ENCODE measurements at regions of chr19 and their contacts with region 1.

Region 1: GRCh38 chr19:6424939-6425731 is 524 bp upstream of the KHSRP start:
- DNase-seq: peak; percentile 98 to 100 (median 100)
- H3K4me3 ChIP-seq: peak overlapping the region in 1 of 2 donors; percentile 33
- H3K4me3 Mint-ChIP-seq: peak overlapping the region; percentile 70 to 88 (median 86)
- H3K27ac ChIP-seq: peak overlapping the region; percentile 62
- H3K27ac Mint-ChIP-seq: peak overlapping the region; percentile 81 to 99 (median 94)
- H3K4me1 ChIP-seq: peaks cover 42% of the 10 kb centered on the region
- H3K4me1 Mint-ChIP-seq: peaks cover 16 to 37% (median 29%) of the 10 kb centered on the region in 4 donors
- H3K27me3 ChIP-seq: no peaks in the 10 kb centered on the region
- H3K27me3 Mint-ChIP-seq: no peaks in the 10 kb centered on the region

Region 2: GRCh38 chr19:6318772-6319171 is 106.4 kb before region 1 on chr19:
- CTCF ChIA-PET with region 1: no interaction called
- POLR2A ChIA-PET with region 1: no interaction called
- intact Hi-C with region 1: no loop called
- DNase-seq: no peak
- H3K4me3 ChIP-seq: no peak overlapping the region
- H3K4me3 Mint-ChIP-seq: no peak overlapping the region
- H3K27ac ChIP-seq: no peak overlapping the region
- H3K27ac Mint-ChIP-seq: no peak overlapping the region
- H3K4me1 ChIP-seq: no peaks in the 10 kb centered on the region
- H3K4me1 Mint-ChIP-seq: no peaks in the 10 kb centered on the region
- H3K27me3 ChIP-seq: no peaks in the 10 kb centered on the region
- H3K27me3 Mint-ChIP-seq: no peaks in the 10 kb centered on the region

Region 3: GRCh38 chr19:6354098-6354674 is 70.9 kb before region 1 on chr19:
- CTCF ChIA-PET with region 1: no interaction called
- POLR2A ChIA-PET with region 1: no interaction called
- intact Hi-C with region 1: no loop called
- DNase-seq: no peak
- H3K4me3 ChIP-seq: no peak overlapping the region
- H3K4me3 Mint-ChIP-seq: no peak overlapping the region
- H3K27ac ChIP-seq: no peak overlapping the region
- H3K27ac Mint-ChIP-seq: peak overlapping the region in 1 of 7 donors; percentile 57
- H3K4me1 ChIP-seq: no peaks in the 10 kb centered on the region
- H3K4me1 Mint-ChIP-seq: peaks cover 0 to 2% (median 0%) of the 10 kb centered on the region in 4 donors
- H3K27me3 ChIP-seq: no peaks in the 10 kb centered on the region
- H3K27me3 Mint-ChIP-seq: no peaks in the 10 kb centered on the region

Region 4: DNA sequence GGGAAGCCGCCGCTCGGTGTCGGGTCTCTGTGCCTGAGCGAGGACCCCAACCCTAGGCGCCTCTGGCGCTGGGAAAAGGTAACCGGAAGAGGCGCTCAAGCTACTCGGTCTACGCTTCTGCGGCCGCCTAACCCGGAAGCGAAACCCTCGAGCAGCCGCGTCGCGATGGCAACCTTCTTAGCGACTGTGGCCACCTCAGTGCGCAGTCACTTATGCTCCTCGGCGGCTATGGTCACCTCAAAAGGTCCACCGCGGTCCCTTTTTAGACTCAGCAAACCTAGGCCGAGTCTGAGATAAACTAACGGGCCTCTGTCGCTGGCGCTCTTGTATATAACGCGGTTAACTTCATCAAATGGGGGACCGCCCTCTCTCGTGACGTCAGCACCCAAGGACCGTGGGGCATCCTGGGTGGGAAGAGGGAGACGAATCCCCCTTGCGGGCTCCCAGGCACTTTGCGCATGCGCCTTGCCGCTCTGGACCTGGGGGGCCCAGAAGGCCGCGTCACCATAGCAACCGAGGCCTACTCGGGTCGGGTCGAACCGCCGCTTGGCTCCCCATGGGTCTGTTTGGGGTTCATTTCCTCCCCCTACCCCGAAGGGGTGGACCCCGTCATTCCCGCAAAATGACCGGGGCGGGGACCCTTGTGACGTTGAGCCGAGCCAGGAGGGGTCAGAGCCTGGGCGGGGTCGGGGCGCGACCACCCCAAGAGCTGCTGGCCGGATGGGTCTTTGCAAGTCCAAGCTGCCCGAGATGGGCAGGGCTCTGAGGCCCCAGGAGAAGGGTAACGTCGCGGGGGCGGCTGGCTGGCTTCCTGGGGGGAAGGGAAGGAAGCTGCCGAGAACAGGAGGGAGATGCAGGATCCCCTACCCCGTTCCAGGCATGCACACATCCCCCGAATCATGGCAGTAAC is 31.8 kb before region 1 on chr19 and contains the start of gene GTF2F1:
- CTCF ChIA-PET with region 1: no interaction called
- POLR2A ChIA-PET with region 1: interaction called, 30 read pairs
- intact Hi-C with region 1: loop called (anchors 1 kb)
- DNase-seq: peak; percentile 93 to 95 (median 94)
- H3K4me3 ChIP-seq: peak within 1 kb of the TSS; percentile 68 to 82
- H3K4me3 Mint-ChIP-seq: peak within 1 kb of the TSS; percentile 93 to 98 (median 96)
- H3K27ac ChIP-seq: peak within 1 kb of the TSS; percentile 96
- H3K27ac Mint-ChIP-seq: peak within 1 kb of the TSS; percentile 96 to 99 (median 98)
- H3K4me1 ChIP-seq: peaks cover 15% of the 10 kb centered on the region
- H3K4me1 Mint-ChIP-seq: peaks cover 17 to 30% (median 23%) of the 10 kb centered on the region in 4 donors
- H3K27me3 ChIP-seq: no peaks in the 10 kb centered on the region
- H3K27me3 Mint-ChIP-seq: no peaks in the 10 kb centered on the region
- total RNA-seq, gene GTF2F1: 56.3 to 57.7 TPM

Region 5: DNA sequence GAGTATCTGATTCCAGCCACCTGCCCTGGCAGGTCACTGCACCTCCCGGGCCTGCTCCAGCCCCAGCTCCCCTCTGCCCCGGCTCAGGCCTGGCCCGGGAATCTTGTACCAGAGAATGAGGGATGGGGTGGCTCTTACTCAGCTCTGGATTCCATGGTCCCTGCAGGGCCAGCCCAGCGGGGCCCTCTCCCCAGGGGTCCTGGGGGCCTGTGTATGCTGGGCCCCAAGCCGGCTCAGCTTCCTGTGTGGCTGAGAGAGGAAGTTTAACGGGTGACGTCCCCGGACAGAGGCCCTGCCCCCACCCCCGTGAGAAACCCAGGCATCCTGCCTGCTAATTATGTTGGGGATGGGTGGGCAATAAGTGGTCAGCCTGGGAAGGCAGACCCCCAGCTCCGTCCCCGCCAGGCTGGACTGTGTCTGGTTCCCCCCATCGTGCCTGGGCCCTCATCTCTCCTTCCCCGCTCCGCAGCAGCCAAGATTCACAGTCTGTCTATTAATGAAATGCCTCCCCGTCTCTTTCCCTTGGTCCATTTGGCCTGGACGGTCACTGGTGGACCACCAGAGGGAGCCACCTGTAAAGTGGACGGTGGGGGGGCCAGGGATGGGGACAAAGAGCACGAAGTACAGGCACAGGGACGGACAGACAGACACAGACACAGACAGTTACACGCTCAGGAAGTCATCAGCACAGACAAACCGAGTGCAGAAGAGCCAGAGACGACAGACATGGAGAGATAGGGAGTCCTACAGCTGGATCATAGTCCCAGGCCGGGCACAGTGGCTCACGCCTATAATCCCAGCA is 56.6 kb after region 1 on chr19 and contains the start of gene DENND1C:
- CTCF ChIA-PET with region 1: no interaction called
- POLR2A ChIA-PET with region 1: interaction called, 29 read pairs
- intact Hi-C with region 1: no loop called
- DNase-seq: peak; percentile 58 to 66 (median 64)
- H3K4me3 ChIP-seq: peak within 1 kb of the TSS; percentile 91 to 97
- H3K4me3 Mint-ChIP-seq: peak within 1 kb of the TSS; percentile 94 to 100 (median 96)
- H3K27ac ChIP-seq: peak within 1 kb of the TSS; percentile 93
- H3K27ac Mint-ChIP-seq: peak within 1 kb of the TSS; percentile 93 to 99 (median 98)
- H3K4me1 ChIP-seq: peaks cover 46% of the 10 kb centered on the region
- H3K4me1 Mint-ChIP-seq: peaks cover 19 to 46% (median 27%) of the 10 kb centered on the region in 4 donors
- H3K27me3 ChIP-seq: no peaks in the 10 kb centered on the region
- H3K27me3 Mint-ChIP-seq: no peaks in the 10 kb centered on the region
- total RNA-seq, gene DENND1C: 105 to 113 TPM

Region 6: GRCh38 chr19:6501740-6502648 is 76.9 kb after region 1 on chr19 and contains the start of gene TUBB4A:
- CTCF ChIA-PET with region 1: interaction called, 4 read pairs
- POLR2A ChIA-PET with region 1: interaction called, 3 read pairs
- intact Hi-C with region 1: loop called (anchors 10 kb)
- DNase-seq: peak in 3 of 5 donors; percentile 15 to 21 (median 17)
- H3K4me3 ChIP-seq: peak within 1 kb of the TSS in 1 of 2 donors; percentile 41
- H3K4me3 Mint-ChIP-seq: peak within 1 kb of the TSS; percentile 79 to 88 (median 84)
- H3K27ac ChIP-seq: no peak within 1 kb of the TSS
- H3K27ac Mint-ChIP-seq: peak within 1 kb of the TSS in 2 of 7 donors; percentile 42 to 81
- H3K4me1 ChIP-seq: peaks cover 18% of the 10 kb centered on the region
- H3K4me1 Mint-ChIP-seq: peaks cover 12 to 22% (median 16%) of the 10 kb centered on the region in 4 donors
- H3K27me3 ChIP-seq: peaks cover 7% of the 10 kb centered on the region
- H3K27me3 Mint-ChIP-seq: peaks cover 2 to 15% of the 10 kb centered on the region in 2 donors
- total RNA-seq, gene TUBB4A: 3.9 to 4.7 TPM